Colonic mucosa (tissue), 4 donors: ENCODE measurements at regions of chr1 and their contacts with region 1.

Region 1: DNA sequence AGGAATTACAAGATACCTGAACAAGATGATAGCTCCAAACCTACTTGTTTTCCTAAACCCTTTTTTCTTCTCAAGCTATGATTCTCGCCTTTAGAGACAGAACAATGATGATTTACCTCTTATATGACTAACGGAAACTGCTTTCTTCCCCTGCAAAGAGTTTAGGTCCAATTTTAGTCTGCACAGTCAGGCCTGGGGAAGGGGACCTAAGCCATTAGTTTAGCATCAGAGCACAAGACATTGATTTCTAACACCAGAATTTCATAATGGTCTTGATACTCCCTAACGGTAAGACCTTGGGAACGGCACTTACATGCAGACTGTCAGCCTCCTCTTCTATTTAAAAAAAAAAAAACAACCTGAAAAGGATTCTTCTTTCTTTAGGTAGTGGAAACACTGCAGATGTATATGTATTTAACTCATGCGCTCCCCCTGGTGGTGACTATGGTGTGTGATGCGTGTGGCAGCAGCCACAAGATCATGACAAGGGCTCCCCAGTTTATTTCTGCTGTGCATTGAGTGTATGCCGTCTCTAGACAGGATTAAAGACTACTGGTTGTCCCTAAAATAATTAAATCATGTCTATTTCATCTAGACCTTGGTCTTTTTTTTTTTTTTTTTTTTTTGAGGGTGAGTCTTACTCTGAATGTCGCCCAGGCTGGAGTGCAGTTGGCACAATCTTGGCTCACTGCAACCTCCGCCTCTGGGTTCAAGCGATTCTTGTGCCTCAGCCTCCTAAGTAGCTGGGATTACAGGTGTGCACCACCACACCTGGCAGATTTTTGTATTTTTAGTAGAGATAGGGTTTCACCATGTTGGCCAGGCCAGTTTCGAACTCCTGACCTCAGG is 37.3 kb upstream of the TMEM222 start:
- DNase-seq: peak; percentile 94
- H3K4me3 ChIP-seq: no peak overlapping the region
- H3K27ac ChIP-seq: no peak overlapping the region
- H3K4me1 ChIP-seq: no peaks in the 10 kb centered on the region
- H3K27me3 ChIP-seq: no peaks in the 10 kb centered on the region
- CTCF ChIP-seq: peak; percentile 75

Region 2: DNA sequence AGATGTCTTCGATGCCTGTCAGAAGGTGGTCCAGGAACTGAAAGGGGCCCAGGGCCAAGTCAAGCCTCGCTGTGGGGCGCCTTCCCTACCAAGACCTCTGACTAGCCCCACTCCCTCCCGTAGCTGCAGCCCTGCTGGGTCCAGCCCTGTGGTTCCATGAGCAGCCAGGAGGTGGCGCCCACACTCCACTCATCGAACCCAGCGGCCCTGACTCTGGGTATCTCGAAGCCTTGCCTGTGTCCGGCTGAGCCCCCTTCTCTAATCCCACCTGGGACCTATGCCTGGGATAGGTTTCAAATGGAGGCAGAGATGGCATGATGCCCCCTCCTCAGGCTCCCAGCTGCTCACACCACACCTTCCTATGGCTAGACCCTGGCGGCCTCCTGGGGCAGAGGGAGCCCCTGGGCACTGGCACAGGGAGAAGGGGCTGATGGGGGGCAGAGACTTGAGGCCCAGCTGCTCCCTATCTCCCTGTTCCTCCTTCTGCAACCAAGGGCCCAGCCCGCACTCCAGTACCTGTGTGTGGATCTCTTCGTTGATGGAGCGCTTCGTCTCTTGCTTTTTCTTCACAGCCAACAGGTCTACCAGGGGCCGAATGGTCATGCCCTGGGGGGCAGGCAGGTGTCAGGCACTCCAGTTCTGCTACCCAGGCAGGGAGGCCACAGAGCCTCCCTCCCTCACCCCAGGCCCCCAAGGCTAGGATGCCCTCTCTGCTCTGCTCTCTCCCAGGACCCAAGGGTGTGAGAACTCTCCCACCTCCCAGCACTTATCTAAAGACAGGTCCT is 181.8 kb before region 1 on chr1:
- intact Hi-C with region 1: loop called (anchors 2 kb)
- DNase-seq: peak; percentile 83
- H3K4me3 ChIP-seq: no peak overlapping the region
- H3K27ac ChIP-seq: no peak overlapping the region
- H3K4me1 ChIP-seq: no peaks in the 10 kb centered on the region
- H3K27me3 ChIP-seq: no peaks in the 10 kb centered on the region
- CTCF ChIP-seq: peak; percentile 96

Region 3: GRCh38 chr1:27234049-27234882 is 50.4 kb before region 1 on chr1 and contains the start of gene WDTC1:
- intact Hi-C with region 1: no loop called
- DNase-seq: peak; percentile 97
- H3K4me3 ChIP-seq: peak within 1 kb of the TSS; percentile 97
- H3K27ac ChIP-seq: peak within 1 kb of the TSS; percentile 71
- H3K4me1 ChIP-seq: no peaks in the 10 kb centered on the region
- H3K27me3 ChIP-seq: no peaks in the 10 kb centered on the region
- CTCF ChIP-seq: no peak
- total RNA-seq, gene WDTC1: 31.2 to 39.3 TPM